Naive thymus-derived CD4-positive, alpha-beta T cell (primary cell): ENCODE measurements at regions of chr17 and their contacts with region 1.

Region 1: DNA sequence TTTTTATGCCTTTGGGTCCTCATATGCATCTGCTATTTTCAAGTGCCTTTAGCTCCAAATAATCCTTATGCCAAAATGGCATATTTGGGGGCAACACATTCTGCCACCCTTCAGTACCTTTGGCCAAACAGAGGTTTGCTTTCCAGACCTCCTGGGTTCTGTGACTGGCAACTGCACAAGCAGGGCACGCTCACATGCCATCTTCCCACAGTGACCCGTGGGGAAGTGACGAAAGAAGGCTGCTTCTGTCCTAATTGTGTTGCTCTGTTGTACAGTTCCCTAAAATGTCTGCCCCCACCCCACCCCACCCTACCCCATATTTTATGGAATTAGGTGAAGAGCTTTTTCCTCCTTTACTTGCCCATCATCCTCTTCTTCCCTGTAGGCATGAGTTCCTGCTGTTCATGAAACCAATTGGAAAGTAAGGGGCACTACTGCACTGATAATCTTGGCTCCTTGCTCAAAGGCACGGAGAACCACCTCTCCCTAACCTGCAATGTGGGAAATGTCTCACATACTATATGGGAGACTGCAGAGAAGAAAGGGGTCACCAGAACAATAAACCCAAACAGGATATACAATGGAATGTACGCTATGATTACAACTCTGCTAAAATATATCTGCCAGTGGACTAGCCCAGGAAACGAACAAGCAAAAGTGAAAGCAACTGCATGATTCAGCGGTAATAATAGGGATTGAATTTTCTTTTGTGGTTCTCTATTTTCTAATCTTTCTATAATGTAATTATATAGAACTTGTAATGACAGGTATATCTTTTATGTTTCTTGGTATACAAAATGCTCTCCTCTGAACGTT is 3.3 kb upstream of the SLFN12L start:
- DNase-seq: peak; percentile 16 to 42 (median 36)
- ATAC-seq: peak; percentile 65
- H3K4me3 ChIP-seq: peak overlapping the region; percentile 64
- H3K4me3 Mint-ChIP-seq: peak overlapping the region; percentile 75 to 99 (median 87)
- H3K27ac ChIP-seq: peak overlapping the region; percentile 74
- H3K27ac Mint-ChIP-seq: peak overlapping the region; percentile 88 to 99 (median 95)
- H3K4me1 ChIP-seq: peaks cover 25 to 30% of the 10 kb centered on the region in 2 donors
- H3K4me1 Mint-ChIP-seq: peaks cover 32 to 64% (median 55%) of the 10 kb centered on the region in 7 donors
- H3K27me3 ChIP-seq: no peaks in the 10 kb centered on the region
- H3K27me3 Mint-ChIP-seq: no peaks in the 10 kb centered on the region

Region 2: GRCh38 chr17:34980681-34981537 is 559.9 kb before region 1 on chr17:
- CTCF ChIA-PET with region 1: interaction called, 4 read pairs
- POLR2A ChIA-PET with region 1: no interaction called
- intact Hi-C with region 1: loop called in 1 of 2 experiments (anchors 5 kb)
- DNase-seq: peak in 7 of 9 donors; percentile 65 to 87 (median 74)
- ATAC-seq: peak; percentile 91
- H3K4me3 ChIP-seq: peak overlapping the region; percentile 68
- H3K4me3 Mint-ChIP-seq: peak overlapping the region; percentile 87 to 97 (median 94)
- H3K27ac ChIP-seq: peak overlapping the region; percentile 99
- H3K27ac Mint-ChIP-seq: peak overlapping the region; percentile 91 to 98 (median 97)
- H3K4me1 ChIP-seq: peaks cover 17 to 26% of the 10 kb centered on the region in 2 donors
- H3K4me1 Mint-ChIP-seq: peaks cover 36 to 57% (median 53%) of the 10 kb centered on the region in 7 donors
- H3K27me3 ChIP-seq: no peaks in the 10 kb centered on the region
- H3K27me3 Mint-ChIP-seq: no peaks in the 10 kb centered on the region

Region 3: DNA sequence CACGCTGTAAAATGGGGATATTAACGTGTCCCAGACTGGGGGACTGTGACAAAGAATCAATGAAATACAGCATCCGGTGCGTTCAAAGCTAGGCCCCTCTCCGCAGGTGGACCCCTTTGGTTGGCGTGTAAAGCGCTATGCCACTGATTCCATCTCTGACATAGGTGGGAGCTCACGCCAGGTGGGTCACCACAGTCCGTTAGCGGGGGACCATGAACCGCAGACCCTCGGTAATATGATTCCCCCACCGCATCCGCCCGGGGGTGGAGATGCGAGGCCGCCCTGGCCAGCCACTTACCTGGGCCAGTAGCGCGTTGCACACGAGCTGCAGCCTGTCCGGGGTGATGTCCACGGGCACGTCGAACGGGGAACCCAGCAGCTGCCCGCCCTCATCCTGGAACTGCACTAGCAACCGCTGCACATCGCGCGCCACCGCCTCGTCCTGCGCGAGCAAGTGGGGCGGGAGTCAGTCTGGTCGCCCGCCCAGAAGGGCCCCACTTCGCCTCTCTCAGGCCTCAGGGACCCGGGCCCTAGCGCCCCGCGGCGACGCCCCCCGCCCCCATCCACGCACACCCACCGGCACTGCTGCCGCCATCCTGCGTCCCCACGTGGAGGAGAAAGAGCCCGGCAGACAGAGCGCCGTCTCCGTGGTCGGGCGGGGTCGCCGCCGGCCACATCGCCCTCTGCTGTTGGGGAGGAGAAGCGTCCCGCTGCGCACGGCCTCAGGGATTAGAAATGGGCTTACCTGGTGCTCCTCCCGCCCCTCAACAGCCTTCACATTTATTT is 398.9 kb before region 1 on chr17 and contains the start of gene NLE1:
- CTCF ChIA-PET with region 1: no interaction called
- POLR2A ChIA-PET with region 1: interaction called, 7 read pairs
- intact Hi-C with region 1: loop called in 1 of 2 experiments (anchors 1 kb)
- DNase-seq: peak; percentile 79 to 94 (median 89)
- ATAC-seq: peak; percentile 100
- H3K4me3 ChIP-seq: peak within 1 kb of the TSS; percentile 79
- H3K4me3 Mint-ChIP-seq: peak within 1 kb of the TSS; percentile 77 to 88 (median 86)
- H3K27ac ChIP-seq: peak within 1 kb of the TSS; percentile 81
- H3K27ac Mint-ChIP-seq: peak within 1 kb of the TSS; percentile 66 to 90 (median 87)
- H3K4me1 ChIP-seq: peaks cover 6 to 13% of the 10 kb centered on the region in 2 donors
- H3K4me1 Mint-ChIP-seq: peaks cover 7 to 30% (median 21%) of the 10 kb centered on the region in 7 donors
- H3K27me3 ChIP-seq: no peaks in the 10 kb centered on the region
- H3K27me3 Mint-ChIP-seq: no peaks in the 10 kb centered on the region
- total RNA-seq, gene NLE1: 10.0 to 29.4 (median 21.8) TPM

Region 4: GRCh38 chr17:35312790-35313711 is 227.7 kb before region 1 on chr17:
- CTCF ChIA-PET with region 1: interaction called, 111 read pairs
- POLR2A ChIA-PET with region 1: interaction called, 189 read pairs
- intact Hi-C with region 1: loop called (anchors 1 kb)
- DNase-seq: peak; percentile 56 to 96 (median 90)
- ATAC-seq: peak; percentile 93
- H3K4me3 ChIP-seq: peak overlapping the region; percentile 70
- H3K4me3 Mint-ChIP-seq: peak overlapping the region; percentile 88 to 98 (median 96)
- H3K27ac ChIP-seq: peak overlapping the region; percentile 73
- H3K27ac Mint-ChIP-seq: peak overlapping the region; percentile 94 to 99 (median 98)
- H3K4me1 ChIP-seq: peaks cover 12 to 13% of the 10 kb centered on the region in 2 donors
- H3K4me1 Mint-ChIP-seq: peaks cover 37 to 79% (median 69%) of the 10 kb centered on the region in 7 donors
- H3K27me3 ChIP-seq: no peaks in the 10 kb centered on the region
- H3K27me3 Mint-ChIP-seq: peaks cover 0 to 5% (median 0%) of the 10 kb centered on the region in 5 donors

Region 5: GRCh38 chr17:35404360-35404759 is 136.4 kb before region 1 on chr17:
- CTCF ChIA-PET with region 1: no interaction called
- POLR2A ChIA-PET with region 1: no interaction called
- intact Hi-C with region 1: no loop called
- DNase-seq: no peak
- ATAC-seq: no peak
- H3K4me3 ChIP-seq: no peak overlapping the region
- H3K4me3 Mint-ChIP-seq: no peak overlapping the region
- H3K27ac ChIP-seq: no peak overlapping the region
- H3K27ac Mint-ChIP-seq: no peak overlapping the region
- H3K4me1 ChIP-seq: peaks cover 3 to 6% of the 10 kb centered on the region in 2 donors
- H3K4me1 Mint-ChIP-seq: peaks cover 0 to 12% (median 0%) of the 10 kb centered on the region in 7 donors
- H3K27me3 ChIP-seq: no peaks in the 10 kb centered on the region
- H3K27me3 Mint-ChIP-seq: no peaks in the 10 kb centered on the region

Region 6: DNA sequence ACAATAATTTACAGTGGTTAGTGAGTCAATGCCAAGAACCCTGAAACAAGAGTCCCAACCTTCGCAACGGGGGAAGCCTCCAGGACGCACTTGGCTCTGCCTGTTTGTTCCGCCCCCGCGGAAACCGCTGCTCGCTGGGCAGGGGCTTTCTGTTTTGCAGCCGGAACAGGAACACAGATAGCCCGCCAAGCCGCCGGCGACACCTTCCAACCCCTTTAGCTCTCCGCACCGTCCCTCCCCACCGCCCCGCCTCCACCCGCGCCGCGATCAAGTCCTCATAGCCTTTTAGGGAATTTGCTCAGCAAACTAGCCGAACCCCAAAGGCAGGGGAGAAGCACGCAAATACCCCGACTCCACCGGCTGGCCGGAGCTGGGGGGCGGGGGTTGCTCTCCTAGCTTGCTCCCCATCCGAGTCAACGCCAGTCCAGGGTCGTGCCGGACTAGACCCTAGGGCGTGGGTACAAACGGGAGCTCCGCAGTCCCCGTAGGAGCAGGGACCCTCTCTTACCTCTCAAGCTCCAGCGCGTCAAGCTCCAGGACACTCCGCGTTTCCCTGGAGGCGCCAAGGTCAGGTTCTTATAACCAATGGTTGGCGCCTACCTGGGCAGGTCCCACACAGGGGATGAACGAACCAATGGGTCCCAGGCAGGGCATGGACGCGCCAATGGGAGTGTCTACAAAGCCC is 92.4 kb before region 1 on chr17 and contains the start of gene SLFN13:
- CTCF ChIA-PET with region 1: no interaction called
- POLR2A ChIA-PET with region 1: interaction called, 3 read pairs
- intact Hi-C with region 1: loop called in 1 of 2 experiments (anchors 5 kb)
- DNase-seq: peak; percentile 59 to 89 (median 74)
- ATAC-seq: peak; percentile 94
- H3K4me3 ChIP-seq: peak within 1 kb of the TSS; percentile 57
- H3K4me3 Mint-ChIP-seq: peak within 1 kb of the TSS; percentile 75 to 94 (median 87)
- H3K27ac ChIP-seq: peak within 1 kb of the TSS; percentile 69
- H3K27ac Mint-ChIP-seq: peak within 1 kb of the TSS; percentile 76 to 94 (median 83)
- H3K4me1 ChIP-seq: peaks cover 7 to 14% of the 10 kb centered on the region in 2 donors
- H3K4me1 Mint-ChIP-seq: peaks cover 0 to 33% (median 26%) of the 10 kb centered on the region in 7 donors
- H3K27me3 ChIP-seq: no peaks in the 10 kb centered on the region
- H3K27me3 Mint-ChIP-seq: no peaks in the 10 kb centered on the region
- total RNA-seq, gene SLFN13: 10.5 to 64.7 (median 21.0) TPM

Region 7: DNA sequence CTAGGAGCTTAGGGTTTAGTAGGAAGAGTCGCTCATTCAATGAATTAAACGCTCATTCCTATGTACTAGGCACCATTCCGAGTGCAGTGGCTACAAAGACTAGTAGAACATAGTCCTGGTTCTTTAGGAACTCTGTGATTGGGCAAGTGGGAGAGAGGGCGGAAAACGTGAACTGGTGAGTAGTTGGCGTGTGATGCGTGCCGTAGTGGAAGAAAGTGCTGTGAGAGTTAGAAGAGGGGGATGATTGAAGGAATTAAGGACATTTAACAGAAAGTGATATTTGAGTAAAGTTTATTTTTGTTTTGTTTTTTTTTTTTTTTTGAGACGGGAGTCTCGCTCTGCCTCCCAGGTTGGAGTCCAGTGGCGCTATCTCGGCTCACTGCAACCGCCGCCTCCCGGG is 27.7 kb after region 1 on chr17:
- CTCF ChIA-PET with region 1: interaction called, 3 read pairs
- POLR2A ChIA-PET with region 1: interaction called, 7 read pairs
- intact Hi-C with region 1: loop called in 1 of 2 experiments (anchors 1 kb)
- DNase-seq: peak in 3 of 9 donors; percentile 17 to 52 (median 34)
- ATAC-seq: peak; percentile 35
- H3K4me3 ChIP-seq: peak overlapping the region; percentile 71
- H3K4me3 Mint-ChIP-seq: peak overlapping the region; percentile 83 to 98 (median 91)
- H3K27ac ChIP-seq: peak overlapping the region; percentile 86
- H3K27ac Mint-ChIP-seq: peak overlapping the region; percentile 64 to 97 (median 93)
- H3K4me1 ChIP-seq: peaks cover 14 to 20% of the 10 kb centered on the region in 2 donors
- H3K4me1 Mint-ChIP-seq: peaks cover 18 to 49% (median 29%) of the 10 kb centered on the region in 7 donors
- H3K27me3 ChIP-seq: no peaks in the 10 kb centered on the region
- H3K27me3 Mint-ChIP-seq: peaks cover 0 to 21% (median 0%) of the 10 kb centered on the region in 5 donors

Region 8: GRCh38 chr17:35747540-35748017 is 206.8 kb after region 1 on chr17:
- CTCF ChIA-PET with region 1: no interaction called
- POLR2A ChIA-PET with region 1: no interaction called
- intact Hi-C with region 1: loop called (anchors 2 to 10 kb)
- DNase-seq: peak; percentile 61 to 83 (median 75)
- ATAC-seq: peak; percentile 93
- H3K4me3 ChIP-seq: no peak overlapping the region
- H3K4me3 Mint-ChIP-seq: no peak overlapping the region
- H3K27ac ChIP-seq: no peak overlapping the region
- H3K27ac Mint-ChIP-seq: no peak overlapping the region
- H3K4me1 ChIP-seq: no peaks in the 10 kb centered on the region
- H3K4me1 Mint-ChIP-seq: peaks cover 0 to 21% (median 3%) of the 10 kb centered on the region in 7 donors
- H3K27me3 ChIP-seq: peaks cover 0 to 10% of the 10 kb centered on the region in 2 donors
- H3K27me3 Mint-ChIP-seq: peaks cover 35 to 50% (median 42%) of the 10 kb centered on the region in 5 donors